HCT116 (cell line): ENCODE measurements at regions of chr10 and their contacts with region 1.

Region 1: DNA sequence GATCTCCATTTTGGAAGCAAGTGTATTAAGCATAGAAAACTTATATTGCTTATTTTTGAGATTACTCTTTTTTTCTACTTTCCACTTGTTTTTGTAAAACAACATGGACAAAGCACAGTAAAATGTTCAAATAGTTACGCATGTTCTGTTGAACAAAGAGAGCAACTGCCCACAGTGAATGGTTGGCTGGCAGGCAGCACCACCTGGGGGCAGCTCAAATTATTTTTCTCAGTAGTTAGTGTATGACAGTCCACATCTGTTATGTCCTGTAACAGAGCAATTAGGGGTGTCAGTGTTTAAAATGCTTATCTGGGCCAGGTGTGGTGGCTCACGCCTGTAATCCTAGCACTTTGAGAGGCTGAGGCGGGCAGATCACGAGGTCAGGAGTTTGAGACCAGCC is 46.1 kb upstream of the CACUL1 start:
- DNase-seq: no peak
- ATAC-seq: peak; percentile 67
- H3K4me3 ChIP-seq: no peak overlapping the region
- H3K27ac ChIP-seq: no peak overlapping the region
- H3K4me1 ChIP-seq: peaks cover 0 to 39% of the 10 kb centered on the region in 2 experiments; a peak in 2 of 4 replicates
- H3K27me3 ChIP-seq: no peaks in the 10 kb centered on the region
- CTCF ChIP-seq: peak; percentile 49 to 70 (median 68); a peak in 5 of 6 replicates
- POLR2A ChIP-seq: no peak
- RAD21 ChIP-seq: peak; percentile 87

Region 2: GRCh38 chr10:118594392-118595063 is 206.4 kb before region 1 on chr10:
- CTCF ChIA-PET with region 1: interaction called, 4 read pairs
- POLR2A ChIA-PET with region 1: no interaction called
- RAD21 ChIA-PET with region 1: no interaction called
- intact Hi-C with region 1: loop called (anchors 10 kb)
- DNase-seq: no peak
- ATAC-seq: peak; percentile 81
- H3K4me3 ChIP-seq: no peak overlapping the region
- H3K27ac ChIP-seq: no peak overlapping the region
- H3K4me1 ChIP-seq: no peaks in the 10 kb centered on the region
- H3K27me3 ChIP-seq: peaks cover 56% of the 10 kb centered on the region
- CTCF ChIP-seq: peak; percentile 32 to 60 (median 59); a peak in 5 of 6 replicates
- POLR2A ChIP-seq: no peak
- RAD21 ChIP-seq: peak; percentile 48

Region 3: GRCh38 chr10:118658762-118659161 is 142.2 kb before region 1 on chr10:
- CTCF ChIA-PET with region 1: no interaction called
- POLR2A ChIA-PET with region 1: no interaction called
- RAD21 ChIA-PET with region 1: no interaction called
- intact Hi-C with region 1: no loop called
- DNase-seq: no peak
- ATAC-seq: no peak
- H3K4me3 ChIP-seq: no peak overlapping the region
- H3K27ac ChIP-seq: no peak overlapping the region
- H3K4me1 ChIP-seq: no peaks in the 10 kb centered on the region
- H3K27me3 ChIP-seq: peaks cover 31% of the 10 kb centered on the region
- CTCF ChIP-seq: no peak
- POLR2A ChIP-seq: no peak
- RAD21 ChIP-seq: no peak